CD14-positive monocyte (primary cell): ENCODE measurements at regions of chr17 and their contacts with region 1.

Region 1: GRCh38 chr17:80152081-80152990 is 5.4 kb upstream of the EIF4A3 start:
- DNase-seq: peak; percentile 29 to 38 (median 37)
- H3K4me3 ChIP-seq: peak overlapping the region in 1 of 3 experiments; percentile 8
- H3K4me3 Mint-ChIP-seq: peak overlapping the region in 1 of 2 donors; percentile 18
- H3K27ac ChIP-seq: no peak overlapping the region
- H3K27ac Mint-ChIP-seq: peak overlapping the region in 6 of 7 donors; percentile 23 to 84 (median 49)
- H3K4me1 ChIP-seq: peaks cover 17 to 23% of the 10 kb centered on the region in 2 donors
- H3K4me1 Mint-ChIP-seq: peaks cover 23% of the 10 kb centered on the region
- H3K27me3 ChIP-seq: no peaks in the 10 kb centered on the region
- H3K27me3 Mint-ChIP-seq: peaks cover 0 to 2% (median 0%) of the 10 kb centered on the region in 3 donors
- CTCF ChIP-seq: no peak

Region 2: GRCh38 chr17:80212962-80213642 is 60.8 kb after region 1 on chr17:
- intact Hi-C with region 1: loop called in 1 of 2 experiments (anchors 5 kb)
- DNase-seq: peak; percentile 81 to 84 (median 83)
- H3K4me3 ChIP-seq: peak overlapping the region in 1 of 3 experiments; percentile 57
- H3K4me3 Mint-ChIP-seq: peak overlapping the region; percentile 53 to 65
- H3K27ac ChIP-seq: peak overlapping the region; percentile 85 to 91
- H3K27ac Mint-ChIP-seq: peak overlapping the region; percentile 88 to 96 (median 93)
- H3K4me1 ChIP-seq: peaks cover 34 to 51% of the 10 kb centered on the region in 2 donors
- H3K4me1 Mint-ChIP-seq: peaks cover 39% of the 10 kb centered on the region
- H3K27me3 ChIP-seq: peaks cover 0 to 2% of the 10 kb centered on the region in 2 donors
- H3K27me3 Mint-ChIP-seq: peaks cover 10 to 31% (median 25%) of the 10 kb centered on the region in 3 donors
- CTCF ChIP-seq: no peak